ENCODE measurements at regions of chr14 and their contacts with region 1.

Region 1: DNA sequence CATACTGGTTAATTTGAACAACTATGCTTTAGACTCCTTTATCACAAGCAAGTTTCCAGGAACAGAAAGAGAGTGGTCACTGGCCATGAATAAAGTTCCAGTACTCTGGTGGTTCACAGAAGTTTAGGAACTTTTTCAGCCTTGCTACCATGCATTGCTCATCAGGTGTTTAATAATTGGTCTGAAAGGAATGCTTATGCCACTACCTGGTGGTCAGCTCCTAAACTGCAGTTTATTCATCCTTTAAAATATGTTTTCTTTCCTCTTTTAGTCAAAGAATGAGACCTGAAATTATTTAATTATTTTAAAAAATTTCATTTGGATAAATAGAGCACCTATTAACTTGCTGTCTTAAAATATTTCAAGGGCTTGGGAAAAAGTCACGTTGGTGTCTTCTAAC is 260.1 kb upstream of the OR4E1 start:
- DNase-seq: no peak
- ATAC-seq: no peak
- H3K4me3 ChIP-seq: no peak overlapping the region
- H3K27ac ChIP-seq: no peak overlapping the region
- H3K4me1 ChIP-seq: no peaks in the 10 kb centered on the region
- H3K27me3 ChIP-seq: no peaks in the 10 kb centered on the region
- CTCF ChIP-seq: no peak

Region 2: DNA sequence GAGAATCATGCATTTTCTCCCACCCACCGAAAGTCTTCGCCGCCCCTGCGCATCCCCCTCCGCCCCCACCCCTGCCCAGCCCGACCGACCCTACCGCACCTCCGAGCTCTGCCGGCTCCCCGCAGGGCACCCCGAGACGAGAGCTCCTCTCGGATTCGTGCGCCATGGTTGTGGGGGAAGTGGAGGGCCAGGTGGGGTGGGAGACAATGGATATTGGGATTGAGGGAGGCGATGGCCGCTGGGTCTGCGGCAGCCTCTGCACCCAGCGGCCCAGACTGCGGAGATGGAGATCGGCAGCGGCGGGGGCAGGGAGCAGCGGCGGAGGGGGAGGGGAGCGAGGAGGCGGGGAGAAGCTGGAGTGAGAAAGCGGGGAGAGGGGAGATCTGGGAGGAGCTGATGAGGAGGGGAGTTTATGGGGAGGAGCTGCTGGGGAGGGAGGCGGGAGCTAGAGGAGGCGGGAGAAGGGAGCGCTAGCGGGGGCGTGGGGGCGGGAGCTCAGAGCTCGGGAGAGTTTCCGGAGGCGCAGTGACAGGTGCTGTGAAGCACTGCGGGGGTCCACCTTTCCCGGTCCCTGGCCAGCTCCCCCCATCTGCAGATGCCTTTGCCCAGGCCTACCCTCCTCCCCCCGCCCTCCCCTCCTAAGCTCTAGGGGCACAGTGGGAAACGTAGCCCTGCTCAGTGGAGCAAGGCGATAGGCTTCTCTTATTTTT is 407.6 kb before region 1 on chr14 and contains the start of gene SALL2:
- CTCF ChIA-PET with region 1: no interaction called
- POLR2A ChIA-PET with region 1: interaction called, 16 read pairs
- in situ Hi-C with region 1: no loop called
- intact Hi-C with region 1: no loop called
- DNase-seq: no peak
- ATAC-seq: peak; percentile 76
- H3K4me3 ChIP-seq: peak within 1 kb of the TSS; percentile 48 to 53
- H3K27ac ChIP-seq: no peak within 1 kb of the TSS
- H3K4me1 ChIP-seq: no peaks in the 10 kb centered on the region
- H3K27me3 ChIP-seq: no peaks in the 10 kb centered on the region
- CTCF ChIP-seq: no peak
- total RNA-seq, gene SALL2: 1.5 TPM

Region 3: GRCh38 chr14:21768116-21768874 is 165.4 kb before region 1 on chr14:
- CTCF ChIA-PET with region 1: no interaction called
- POLR2A ChIA-PET with region 1: no interaction called
- in situ Hi-C with region 1: no loop called
- intact Hi-C with region 1: no loop called
- DNase-seq: no peak
- ATAC-seq: peak; percentile 76; the same call in 1 of the 2 replicates
- H3K4me3 ChIP-seq: no peak overlapping the region
- H3K27ac ChIP-seq: no peak overlapping the region
- H3K4me1 ChIP-seq: no peaks in the 10 kb centered on the region
- H3K27me3 ChIP-seq: no peaks in the 10 kb centered on the region
- CTCF ChIP-seq: peak; percentile 74

Region 4: DNA sequence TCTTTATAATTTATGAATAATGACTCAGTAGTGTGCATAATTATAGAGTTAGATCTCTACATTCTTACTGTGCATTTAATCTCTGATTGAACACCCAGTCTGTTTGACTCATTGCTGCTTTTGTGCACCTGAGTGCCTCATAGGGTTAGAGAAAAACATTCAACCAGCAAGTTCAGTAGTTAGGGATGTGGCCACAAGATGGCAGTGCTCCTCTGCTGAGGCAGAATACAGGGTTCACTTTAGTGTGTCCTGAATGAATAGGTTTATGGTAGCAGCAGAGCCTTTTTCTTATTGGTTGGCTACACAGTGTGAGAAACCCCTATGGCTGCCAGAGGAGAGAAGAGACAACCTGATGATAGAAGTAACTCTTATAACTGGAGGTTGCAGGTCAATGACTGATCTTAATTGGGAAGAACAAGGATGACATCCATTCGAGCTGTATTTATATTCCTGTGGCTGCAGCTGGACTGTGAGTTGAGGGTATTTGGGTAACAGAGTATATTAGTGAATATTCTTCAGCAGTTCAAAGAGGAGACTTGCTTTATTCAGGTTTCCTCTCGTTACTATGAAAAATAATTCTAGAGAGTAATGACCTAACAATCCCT is 65.1 kb before region 1 on chr14:
- CTCF ChIA-PET with region 1: no interaction called
- POLR2A ChIA-PET with region 1: no interaction called
- in situ Hi-C with region 1: no loop called
- intact Hi-C with region 1: loop called (anchors 2 kb)
- DNase-seq: peak; percentile 58
- ATAC-seq: peak; percentile 89
- H3K4me3 ChIP-seq: no peak overlapping the region
- H3K27ac ChIP-seq: no peak overlapping the region
- H3K4me1 ChIP-seq: no peaks in the 10 kb centered on the region
- H3K27me3 ChIP-seq: no peaks in the 10 kb centered on the region; the same call in 1 of the 2 replicates
- CTCF ChIP-seq: peak; percentile 79